ENCODE measurements at regions of chr7 and their contacts with region 1.

Region 1: DNA sequence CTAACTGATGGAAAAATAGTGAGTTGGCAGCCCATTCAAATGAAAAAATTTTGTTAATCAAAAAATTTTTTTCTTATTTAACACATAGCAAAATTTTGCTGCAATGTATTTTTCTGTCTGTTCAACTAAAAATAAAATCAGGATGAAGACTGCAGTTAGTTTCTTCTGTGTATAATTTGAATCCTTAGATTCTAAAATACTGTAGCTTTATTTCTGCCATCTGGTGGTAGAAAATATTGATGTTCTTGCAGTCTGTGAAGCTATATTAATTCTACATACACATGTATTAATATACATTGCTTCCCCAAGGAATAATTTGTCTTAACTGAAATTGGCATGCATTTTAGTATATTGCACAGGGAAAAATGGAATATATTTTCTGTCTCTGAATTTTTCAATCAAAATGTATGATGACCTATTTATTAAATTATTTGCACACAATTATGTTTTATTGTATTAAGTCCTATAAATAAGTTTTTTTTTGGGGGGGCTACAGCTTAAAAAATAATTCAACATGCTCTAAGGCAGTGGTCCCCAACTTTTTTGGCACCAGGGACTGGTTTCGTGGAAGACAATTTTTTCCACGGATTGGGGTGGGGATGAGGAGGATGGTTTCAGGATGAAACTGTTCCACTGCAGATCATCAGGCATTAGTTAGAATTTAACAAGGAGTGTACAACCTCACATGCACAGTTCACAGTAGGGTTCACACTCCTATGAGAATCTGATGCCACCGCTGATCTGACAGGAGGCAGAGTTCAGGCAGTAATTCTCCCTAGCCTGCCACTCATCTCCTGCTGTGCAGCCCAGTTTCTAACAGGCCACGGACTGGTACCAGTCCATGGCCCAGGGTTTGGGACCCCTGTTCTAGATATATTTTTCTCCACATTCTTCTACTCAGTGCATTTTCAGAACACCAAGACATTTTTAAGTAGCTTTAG is 119.4 kb downstream of the GNAT3 start:
- DNase-seq: peak in 5 of 9 donors; percentile 13 to 38 (median 21)
- ATAC-seq: no peak
- H3K4me3 ChIP-seq: no peak overlapping the region
- H3K4me3 Mint-ChIP-seq: no peak overlapping the region
- H3K27ac ChIP-seq: no peak overlapping the region
- H3K27ac Mint-ChIP-seq: peak overlapping the region in 1 of 9 donors; percentile 23
- H3K4me1 ChIP-seq: no peaks in the 10 kb centered on the region
- H3K4me1 Mint-ChIP-seq: no peaks in the 10 kb centered on the region
- H3K27me3 ChIP-seq: no peaks in the 10 kb centered on the region
- H3K27me3 Mint-ChIP-seq: no peaks in the 10 kb centered on the region

Region 2: DNA sequence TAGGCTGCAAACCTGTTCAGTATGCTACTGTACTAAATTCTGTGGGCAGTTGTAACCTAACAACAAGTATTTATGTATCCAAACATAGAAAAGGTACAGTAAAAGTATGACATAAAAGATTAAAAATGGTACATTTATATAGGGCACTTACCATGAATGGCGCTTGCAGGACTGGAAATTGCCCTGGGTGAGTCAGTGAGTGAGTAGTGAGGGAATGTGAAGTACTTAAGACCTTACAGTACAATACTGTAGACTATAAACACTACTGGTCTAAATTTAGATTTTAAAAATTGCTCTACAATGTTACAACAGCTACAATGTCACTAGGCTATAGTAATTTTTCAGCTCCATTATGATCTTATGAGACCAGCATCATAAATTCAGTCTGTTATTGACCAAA is 403.8 kb before region 1 on chr7:
- CTCF ChIA-PET with region 1: no interaction called
- POLR2A ChIA-PET with region 1: no interaction called
- intact Hi-C with region 1: no loop called
- DNase-seq: no peak
- ATAC-seq: no peak
- H3K4me3 ChIP-seq: no peak overlapping the region
- H3K4me3 Mint-ChIP-seq: no peak overlapping the region
- H3K27ac ChIP-seq: no peak overlapping the region
- H3K27ac Mint-ChIP-seq: no peak overlapping the region
- H3K4me1 ChIP-seq: no peaks in the 10 kb centered on the region
- H3K4me1 Mint-ChIP-seq: no peaks in the 10 kb centered on the region
- H3K27me3 ChIP-seq: no peaks in the 10 kb centered on the region
- H3K27me3 Mint-ChIP-seq: no peaks in the 10 kb centered on the region

Region 3: GRCh38 chr7:80060218-80060806 is 332.2 kb before region 1 on chr7:
- CTCF ChIA-PET with region 1: interaction called, 11 read pairs
- POLR2A ChIA-PET with region 1: no interaction called
- intact Hi-C with region 1: loop called in 1 of 2 experiments (anchors 1 kb)
- DNase-seq: peak in 5 of 9 donors; percentile 13 to 40 (median 22)
- ATAC-seq: no peak
- H3K4me3 ChIP-seq: no peak overlapping the region
- H3K4me3 Mint-ChIP-seq: no peak overlapping the region
- H3K27ac ChIP-seq: no peak overlapping the region
- H3K27ac Mint-ChIP-seq: no peak overlapping the region
- H3K4me1 ChIP-seq: no peaks in the 10 kb centered on the region
- H3K4me1 Mint-ChIP-seq: no peaks in the 10 kb centered on the region
- H3K27me3 ChIP-seq: no peaks in the 10 kb centered on the region
- H3K27me3 Mint-ChIP-seq: no peaks in the 10 kb centered on the region

Region 4: GRCh38 chr7:80206763-80207162 is 185.7 kb before region 1 on chr7:
- CTCF ChIA-PET with region 1: no interaction called
- POLR2A ChIA-PET with region 1: no interaction called
- intact Hi-C with region 1: loop called in 1 of 2 experiments (anchors 1 kb)
- DNase-seq: no peak
- ATAC-seq: no peak
- H3K4me3 ChIP-seq: no peak overlapping the region
- H3K4me3 Mint-ChIP-seq: no peak overlapping the region
- H3K27ac ChIP-seq: no peak overlapping the region
- H3K27ac Mint-ChIP-seq: no peak overlapping the region
- H3K4me1 ChIP-seq: no peaks in the 10 kb centered on the region
- H3K4me1 Mint-ChIP-seq: no peaks in the 10 kb centered on the region
- H3K27me3 ChIP-seq: no peaks in the 10 kb centered on the region
- H3K27me3 Mint-ChIP-seq: no peaks in the 10 kb centered on the region

Region 5: DNA sequence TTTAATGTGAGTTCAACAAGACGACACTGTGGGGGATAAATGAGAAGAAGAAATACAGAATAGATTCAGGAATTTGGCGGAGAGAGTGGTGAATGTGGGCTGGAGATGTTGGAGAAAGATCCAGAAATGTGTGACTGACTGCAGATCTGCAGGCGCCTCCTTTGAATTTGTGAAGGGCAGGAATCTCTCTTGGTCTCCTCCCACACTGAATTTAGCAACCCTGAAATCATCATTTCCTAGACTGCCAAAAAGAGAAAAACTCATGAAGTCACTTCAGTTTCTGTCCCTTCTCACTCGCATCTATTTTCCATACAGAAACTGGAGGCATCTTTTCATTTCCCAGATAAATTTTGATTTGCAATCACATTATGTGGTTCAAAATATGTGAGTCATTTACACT is 129.2 kb before region 1 on chr7:
- CTCF ChIA-PET with region 1: no interaction called
- POLR2A ChIA-PET with region 1: no interaction called
- intact Hi-C with region 1: loop called in 1 of 2 experiments (anchors 10 kb)
- DNase-seq: no peak
- ATAC-seq: no peak
- H3K4me3 ChIP-seq: no peak overlapping the region
- H3K4me3 Mint-ChIP-seq: no peak overlapping the region
- H3K27ac ChIP-seq: no peak overlapping the region
- H3K27ac Mint-ChIP-seq: no peak overlapping the region
- H3K4me1 ChIP-seq: no peaks in the 10 kb centered on the region
- H3K4me1 Mint-ChIP-seq: no peaks in the 10 kb centered on the region
- H3K27me3 ChIP-seq: no peaks in the 10 kb centered on the region
- H3K27me3 Mint-ChIP-seq: no peaks in the 10 kb centered on the region

Region 6: DNA sequence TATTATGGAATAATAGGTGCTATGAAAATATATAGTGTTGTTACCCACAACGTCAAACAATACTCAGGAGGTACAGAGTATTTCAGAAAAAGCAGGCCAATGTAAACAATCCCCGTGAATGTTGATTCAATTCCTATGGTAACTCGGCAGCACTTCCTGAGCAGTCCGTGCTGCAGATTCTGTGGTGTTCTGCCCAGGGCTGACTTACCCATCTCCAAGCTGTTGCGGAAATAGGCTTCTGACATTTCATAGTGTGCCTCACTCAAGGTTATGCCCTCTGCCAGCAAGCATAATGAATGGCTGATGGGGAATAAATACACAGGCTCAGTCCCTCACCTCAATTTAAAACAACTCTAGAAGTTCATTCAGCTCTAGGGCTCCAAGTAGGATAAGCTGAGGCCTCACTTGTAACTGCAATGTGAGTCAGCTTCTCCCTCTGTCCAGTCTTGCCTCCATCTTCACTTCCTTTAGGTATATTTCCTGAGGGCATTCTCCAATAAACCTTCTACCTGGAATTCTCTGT is 80.3 kb before region 1 on chr7:
- CTCF ChIA-PET with region 1: no interaction called
- POLR2A ChIA-PET with region 1: no interaction called
- intact Hi-C with region 1: loop called in 1 of 2 experiments (anchors 5 kb)
- DNase-seq: peak in 7 of 9 donors; percentile 34 to 69 (median 54)
- ATAC-seq: peak; percentile 82
- H3K4me3 ChIP-seq: no peak overlapping the region
- H3K4me3 Mint-ChIP-seq: peak overlapping the region in 8 of 10 donors; percentile 51 to 78 (median 60)
- H3K27ac ChIP-seq: peak overlapping the region; percentile 17
- H3K27ac Mint-ChIP-seq: peak overlapping the region in 8 of 9 donors; percentile 19 to 87 (median 52)
- H3K4me1 ChIP-seq: peaks cover 0 to 24% of the 10 kb centered on the region in 2 donors
- H3K4me1 Mint-ChIP-seq: peaks cover 0 to 41% (median 28%) of the 10 kb centered on the region in 7 donors
- H3K27me3 ChIP-seq: no peaks in the 10 kb centered on the region
- H3K27me3 Mint-ChIP-seq: no peaks in the 10 kb centered on the region

Measured in naive thymus-derived CD4-positive, alpha-beta T cell (primary cell).